Panc1 (cell line): ENCODE measurements at regions of chr16 and their contacts with region 1.

Region 1: DNA sequence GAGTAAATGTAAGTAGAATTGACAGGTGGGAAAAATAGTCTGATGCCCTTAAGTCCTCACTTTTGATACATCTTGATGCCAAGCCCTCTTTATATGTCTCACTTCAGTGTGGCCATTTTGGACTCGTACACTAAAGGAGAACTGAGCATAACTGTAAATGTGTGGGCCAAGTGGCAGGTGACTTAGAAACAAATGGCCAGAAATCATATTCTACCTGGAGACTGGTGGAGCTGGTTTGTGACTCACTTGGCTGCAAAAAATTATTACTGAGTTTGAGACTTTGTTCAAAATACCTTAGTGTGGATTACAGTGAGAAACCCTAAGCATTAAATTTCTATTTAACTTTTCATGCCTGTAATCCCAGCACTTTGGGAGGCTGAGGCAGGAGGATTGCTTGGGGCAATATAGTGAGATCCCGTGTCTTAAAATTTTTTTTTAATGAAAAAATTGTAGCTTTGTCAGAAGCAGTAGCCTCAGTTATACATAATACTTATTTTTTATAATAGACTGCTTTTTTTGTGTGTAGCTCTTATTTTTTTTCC is 5.0 kb downstream of the HAPSTR1 start:
- DNase-seq: no peak
- ATAC-seq: no peak
- H3K4me3 ChIP-seq: no peak overlapping the region
- H3K27ac ChIP-seq: no peak overlapping the region
- H3K4me1 ChIP-seq: peaks cover 54% of the 10 kb centered on the region
- H3K27me3 ChIP-seq: no peaks in the 10 kb centered on the region
- CTCF ChIP-seq: no peak

Region 2: GRCh38 chr16:9112844-9113186 is 16.3 kb after region 1 on chr16:
- CTCF ChIA-PET with region 1: no interaction called
- POLR2A ChIA-PET with region 1: interaction called, 14 read pairs
- in situ Hi-C with region 1: no loop called
- intact Hi-C with region 1: no loop called
- DNase-seq: no peak
- ATAC-seq: no peak
- H3K4me3 ChIP-seq: no peak overlapping the region
- H3K27ac ChIP-seq: no peak overlapping the region
- H3K4me1 ChIP-seq: peaks cover 37% of the 10 kb centered on the region
- H3K27me3 ChIP-seq: no peaks in the 10 kb centered on the region
- CTCF ChIP-seq: no peak